Activated T-helper 1 cell treated with anti-CD3 and anti-CD28 coated beads, Interleukin-12 subunit alpha, Interleukin-12 subunit beta, Interleukin-2, Interleukin-4 antibody, amounts not matched to agents 30 ng/mL and 10 ng/mL and 1 ng/mL, durations not matched to agents 14 hours and 24 hours and 36 hours (primary cell): ENCODE measurements at regions of chr17 and their contacts with region 1.

Region 1: GRCh38 chr17:71472809-71473789 is 647.7 kb upstream of the SOX9 start:
- DNase-seq: no peak
- H3K4me3 Mint-ChIP-seq: no peak overlapping the region
- H3K27ac Mint-ChIP-seq: no peak overlapping the region
- H3K4me1 Mint-ChIP-seq: no peaks in the 10 kb centered on the region
- H3K27me3 Mint-ChIP-seq: no peaks in the 10 kb centered on the region

Region 2: DNA sequence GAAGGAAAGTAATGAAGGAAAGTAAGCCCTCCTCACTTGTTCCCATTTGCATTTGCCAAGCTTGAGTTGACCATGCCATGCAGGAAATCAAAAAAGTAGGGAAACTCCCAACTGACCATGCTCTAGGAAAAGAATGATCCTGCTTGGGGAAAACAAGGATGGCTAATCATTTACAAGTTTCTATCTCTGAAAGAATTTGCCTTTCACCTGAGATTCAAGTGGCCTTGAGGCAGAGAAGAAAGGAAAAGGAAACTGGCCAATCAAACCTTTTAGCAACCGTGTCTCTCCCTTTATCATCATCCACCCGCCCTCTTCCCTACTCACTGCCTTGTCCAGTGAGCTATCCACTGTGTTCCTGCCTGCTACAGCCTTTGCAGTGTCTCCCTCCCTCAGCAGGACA is 109.4 kb before region 1 on chr17:
- intact Hi-C with region 1: no loop called
- DNase-seq: no peak
- H3K4me3 Mint-ChIP-seq: no peak overlapping the region
- H3K27ac Mint-ChIP-seq: no peak overlapping the region
- H3K4me1 Mint-ChIP-seq: no peaks in the 10 kb centered on the region
- H3K27me3 Mint-ChIP-seq: no peaks in the 10 kb centered on the region

Region 3: DNA sequence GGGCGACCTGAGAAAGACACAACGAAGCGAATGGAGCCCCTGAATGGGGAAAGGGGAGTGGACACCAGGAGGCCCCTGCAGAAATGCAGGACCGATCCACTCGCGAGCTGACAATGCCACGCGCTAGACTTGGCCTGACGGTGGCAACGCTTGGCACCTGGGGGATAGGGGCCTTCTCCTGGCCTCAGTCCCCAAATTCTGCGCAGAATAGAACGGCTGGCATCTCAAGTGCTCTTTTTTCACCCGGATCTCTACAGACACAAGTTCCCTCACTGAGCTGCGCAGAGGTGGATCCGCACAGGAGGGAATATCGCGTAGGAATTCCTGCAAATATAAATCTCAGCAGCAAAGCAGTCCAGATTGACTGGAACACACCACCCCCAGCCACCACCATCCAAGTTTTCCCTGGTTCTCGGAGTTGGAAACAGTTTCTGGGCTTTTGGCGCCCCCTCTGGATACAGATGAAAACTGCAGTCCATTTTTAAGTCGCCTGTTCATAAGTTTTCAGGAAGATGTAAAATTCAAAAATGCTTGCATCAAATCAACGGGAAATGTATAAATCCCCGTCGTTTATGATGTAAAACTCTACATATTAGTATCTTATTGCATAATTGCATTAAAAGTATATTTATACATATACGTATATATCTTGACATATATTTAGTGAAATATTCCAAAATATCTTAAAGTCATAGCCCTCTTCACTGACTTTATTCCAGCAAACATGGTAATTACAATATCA is 645.4 kb after region 1 on chr17:
- intact Hi-C with region 1: loop called (anchors 10 kb)
- DNase-seq: no peak
- H3K4me3 Mint-ChIP-seq: no peak overlapping the region
- H3K27ac Mint-ChIP-seq: peak overlapping the region; percentile 23
- H3K4me1 Mint-ChIP-seq: no peaks in the 10 kb centered on the region
- H3K27me3 Mint-ChIP-seq: peaks cover 65% of the 10 kb centered on the region

Region 4: DNA sequence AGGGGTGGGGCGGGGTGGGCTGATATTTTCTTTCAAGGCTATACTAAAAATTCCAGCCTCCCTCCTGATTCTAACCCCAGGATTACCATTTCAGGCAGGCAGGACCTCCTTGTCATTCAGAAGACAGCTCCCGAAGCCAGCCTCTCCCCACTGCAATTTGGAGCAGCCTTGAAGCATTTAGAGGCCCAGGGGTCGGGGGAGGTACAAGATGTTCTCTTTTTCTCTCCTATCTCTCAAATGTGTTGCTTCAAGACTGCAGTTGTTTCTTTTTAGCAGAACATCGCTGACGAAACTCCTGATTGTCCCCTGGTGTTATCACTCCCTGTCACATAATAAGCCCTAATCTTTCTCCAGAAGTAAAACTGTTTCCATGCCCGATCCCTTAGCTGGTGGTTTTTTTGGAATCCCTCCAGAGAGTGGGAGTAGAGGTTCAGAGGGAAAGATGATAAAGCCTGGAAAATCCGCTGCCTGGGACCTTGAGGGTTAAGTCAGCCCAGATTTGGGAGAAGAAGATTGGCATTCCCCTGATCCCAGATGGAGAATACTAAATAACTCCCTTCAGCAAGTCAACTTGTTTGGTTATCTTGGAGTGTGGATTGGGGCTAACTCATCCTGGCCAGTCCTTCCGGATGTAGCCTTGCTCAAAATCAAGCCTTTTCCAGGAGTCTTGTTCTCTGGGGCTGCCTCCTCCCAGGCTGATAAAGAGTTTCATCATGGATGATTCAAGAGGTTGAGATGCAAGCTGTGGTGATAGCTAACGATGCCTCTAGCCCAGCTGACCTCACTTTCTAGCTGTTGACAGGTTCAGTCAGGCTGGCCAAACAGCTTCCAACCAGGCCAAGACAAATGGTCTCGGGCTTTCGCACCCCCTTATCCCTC is 719.1 kb after region 1 on chr17:
- intact Hi-C with region 1: loop called (anchors 5 kb)
- DNase-seq: no peak
- H3K4me3 Mint-ChIP-seq: no peak overlapping the region
- H3K27ac Mint-ChIP-seq: no peak overlapping the region
- H3K4me1 Mint-ChIP-seq: no peaks in the 10 kb centered on the region
- H3K27me3 Mint-ChIP-seq: no peaks in the 10 kb centered on the region

Region 5: GRCh38 chr17:72539981-72540897 is 1067.1 kb after region 1 on chr17:
- intact Hi-C with region 1: loop called (anchors 5 kb)
- DNase-seq: peak; percentile 56
- H3K4me3 Mint-ChIP-seq: no peak overlapping the region
- H3K27ac Mint-ChIP-seq: no peak overlapping the region
- H3K4me1 Mint-ChIP-seq: peaks cover 5% of the 10 kb centered on the region
- H3K27me3 Mint-ChIP-seq: peaks cover 13% of the 10 kb centered on the region